ENCODE measurements at regions of chr4 and their contacts with region 1.

Region 1: GRCh38 chr4:155953151-155954114 is at the start of gene CTSO:
- DNase-seq: peak; percentile 81
- CTCF ChIP-seq: peak; percentile 53

Region 2: GRCh38 chr4:155828628-155829027 is 124.8 kb before region 1 on chr4:
- in situ Hi-C with region 1: no loop called
- DNase-seq: no peak
- CTCF ChIP-seq: no peak

Region 3: GRCh38 chr4:156378033-156378665 is 424.7 kb after region 1 on chr4:
- in situ Hi-C with region 1: loop called (anchors 25 kb)
- DNase-seq: peak; percentile 52
- CTCF ChIP-seq: peak; percentile 64

Measured in GM13977 (cell line).